ENCODE measurements at regions of chr2 and their contacts with region 1.

Region 1: DNA sequence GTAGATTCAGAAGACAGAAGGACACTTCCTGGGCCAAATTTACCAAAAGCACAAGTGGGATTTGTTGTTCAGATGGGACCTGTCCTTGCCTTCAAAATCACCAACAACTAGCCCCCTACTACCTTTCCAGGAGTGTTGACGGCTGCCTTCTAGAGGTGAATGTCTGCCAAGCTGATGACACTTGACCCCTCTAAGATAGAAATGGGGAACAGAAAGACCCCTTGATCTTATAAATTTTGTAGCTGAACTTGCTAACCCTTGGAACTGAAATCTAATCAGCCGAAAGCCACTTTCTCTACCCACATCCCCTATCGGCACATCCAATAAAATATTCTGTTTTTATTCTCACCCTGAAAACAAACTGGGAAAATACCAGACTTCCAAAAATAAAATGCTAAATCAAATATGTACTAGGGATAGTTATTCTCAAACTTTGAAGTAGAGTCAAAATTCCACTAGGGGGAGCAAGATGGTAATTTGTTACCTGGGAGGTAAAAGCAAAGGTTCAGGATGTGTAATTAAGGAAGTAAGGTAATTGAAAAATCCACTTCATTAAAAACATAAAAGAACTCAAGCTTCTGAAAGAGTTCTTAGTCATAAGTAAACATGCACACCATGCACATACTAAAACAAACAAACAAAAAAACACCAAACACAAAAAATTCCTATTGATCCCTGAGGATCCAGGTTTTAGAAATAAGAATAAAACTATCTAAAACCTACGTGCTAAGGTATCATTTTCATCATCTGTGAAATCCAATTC is 119.2 kb downstream of the ANKRD44 start:
- DNase-seq: no peak
- H3K4me3 Mint-ChIP-seq: no peak overlapping the region
- H3K27ac Mint-ChIP-seq: peak overlapping the region; percentile 62
- H3K4me1 Mint-ChIP-seq: peaks cover 71% of the 10 kb centered on the region
- H3K27me3 Mint-ChIP-seq: no peaks in the 10 kb centered on the region

Region 2: DNA sequence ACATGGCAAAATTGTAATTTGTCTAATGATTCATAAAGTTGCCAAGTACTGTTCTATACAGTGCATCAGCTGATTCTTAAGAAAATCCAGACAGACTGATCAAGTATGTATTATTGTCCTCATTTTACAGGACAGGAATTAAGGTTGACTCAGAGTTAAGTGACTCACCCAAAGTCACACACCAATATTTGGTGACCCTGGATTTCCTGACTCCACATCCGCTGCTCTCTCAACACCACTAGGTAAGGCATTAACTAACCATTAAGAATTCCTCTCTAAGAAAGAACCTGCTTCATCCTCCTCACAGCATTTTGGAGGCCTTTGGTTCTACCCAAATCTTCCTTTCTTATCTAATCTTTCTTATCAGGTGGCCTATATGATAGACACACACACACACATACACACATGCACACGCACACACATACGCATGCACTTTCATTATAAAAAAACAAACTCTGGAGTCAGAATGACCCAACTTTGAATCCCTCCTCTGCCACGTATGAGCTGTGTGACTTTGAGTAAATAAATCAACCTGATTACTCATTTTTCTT is 31.6 kb before region 1 on chr2:
- CTCF ChIA-PET with region 1: interaction called, 3 read pairs
- POLR2A ChIA-PET with region 1: no interaction called
- intact Hi-C with region 1: loop called (anchors 2 kb)
- DNase-seq: peak; percentile 64
- H3K4me3 Mint-ChIP-seq: peak overlapping the region; percentile 0
- H3K27ac Mint-ChIP-seq: peak overlapping the region; percentile 87
- H3K4me1 Mint-ChIP-seq: peaks cover 72% of the 10 kb centered on the region
- H3K27me3 Mint-ChIP-seq: no peaks in the 10 kb centered on the region

Region 3: DNA sequence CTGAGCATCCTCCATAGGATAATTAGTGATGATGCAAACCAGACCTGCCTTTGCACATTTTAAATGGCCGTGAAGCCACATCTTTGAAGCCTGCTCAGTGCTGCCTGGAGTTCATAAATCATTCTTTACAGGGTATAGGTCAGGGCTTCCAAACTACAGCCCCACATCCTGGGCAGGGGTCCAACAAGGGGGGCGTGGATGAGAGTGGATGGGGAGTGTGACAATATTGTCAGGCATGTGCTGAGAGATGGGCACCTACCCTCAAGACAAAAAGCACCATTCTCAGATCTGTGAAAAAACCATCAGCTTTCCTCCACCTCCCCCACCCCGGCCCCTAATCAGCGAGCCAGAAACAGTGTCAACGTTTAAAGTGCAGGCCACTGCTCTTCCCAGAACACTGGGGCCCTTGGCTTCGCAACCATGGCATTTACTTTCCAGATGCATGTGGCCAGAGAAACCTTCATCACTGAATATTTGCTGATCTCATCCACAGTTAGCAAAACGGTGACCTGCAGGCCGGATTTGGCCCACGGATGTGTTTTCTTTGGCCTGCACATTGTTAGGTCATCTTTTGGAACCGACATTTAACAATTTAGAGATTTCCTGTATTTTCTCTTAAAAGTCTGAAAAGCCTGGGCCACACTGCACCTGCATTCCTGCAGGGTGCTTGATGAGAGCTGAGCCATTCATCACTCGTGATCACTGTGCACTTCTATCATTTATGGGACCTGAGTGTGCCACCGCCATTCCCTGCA is 11.4 kb before region 1 on chr2:
- CTCF ChIA-PET with region 1: interaction called, 26 read pairs
- POLR2A ChIA-PET with region 1: no interaction called
- intact Hi-C with region 1: no loop called
- DNase-seq: no peak
- H3K4me3 Mint-ChIP-seq: no peak overlapping the region
- H3K27ac Mint-ChIP-seq: peak overlapping the region; percentile 16
- H3K4me1 Mint-ChIP-seq: peaks cover 66% of the 10 kb centered on the region
- H3K27me3 Mint-ChIP-seq: no peaks in the 10 kb centered on the region

Region 4: DNA sequence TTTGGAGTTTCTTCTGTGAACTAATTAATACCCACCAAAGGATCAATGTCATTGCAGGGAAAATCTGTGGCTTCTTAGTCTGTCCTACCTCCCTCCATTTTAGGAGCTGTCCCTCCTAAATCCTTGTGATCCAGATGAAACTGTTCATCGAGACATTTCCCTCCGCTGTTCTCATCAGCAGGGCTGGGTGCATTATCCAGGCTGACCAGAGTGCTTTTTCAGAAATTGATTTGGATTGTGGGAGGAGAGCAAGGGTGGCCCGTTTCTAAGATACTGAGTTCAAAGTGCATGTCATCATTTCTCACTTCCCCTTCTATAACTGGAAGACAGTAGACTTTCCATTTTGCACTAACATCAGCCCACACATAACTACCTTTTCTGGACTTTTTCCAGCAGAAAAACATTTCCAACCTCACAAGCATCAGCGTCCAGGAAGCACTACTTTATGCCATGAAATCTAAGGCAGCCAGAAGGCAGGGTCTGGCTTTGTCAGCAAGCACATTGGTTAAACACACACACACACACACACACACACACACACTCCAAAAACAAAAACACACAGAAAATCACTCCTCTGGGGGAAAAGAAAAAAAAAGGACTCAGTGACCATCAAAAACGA is 25.1 kb after region 1 on chr2:
- CTCF ChIA-PET with region 1: interaction called, 13 read pairs
- POLR2A ChIA-PET with region 1: interaction called, 3 read pairs
- intact Hi-C with region 1: loop called (anchors 1 kb)
- DNase-seq: no peak
- H3K4me3 Mint-ChIP-seq: peak overlapping the region; percentile 62
- H3K27ac Mint-ChIP-seq: peak overlapping the region; percentile 94
- H3K4me1 Mint-ChIP-seq: peaks cover 86% of the 10 kb centered on the region
- H3K27me3 Mint-ChIP-seq: no peaks in the 10 kb centered on the region

Region 5: DNA sequence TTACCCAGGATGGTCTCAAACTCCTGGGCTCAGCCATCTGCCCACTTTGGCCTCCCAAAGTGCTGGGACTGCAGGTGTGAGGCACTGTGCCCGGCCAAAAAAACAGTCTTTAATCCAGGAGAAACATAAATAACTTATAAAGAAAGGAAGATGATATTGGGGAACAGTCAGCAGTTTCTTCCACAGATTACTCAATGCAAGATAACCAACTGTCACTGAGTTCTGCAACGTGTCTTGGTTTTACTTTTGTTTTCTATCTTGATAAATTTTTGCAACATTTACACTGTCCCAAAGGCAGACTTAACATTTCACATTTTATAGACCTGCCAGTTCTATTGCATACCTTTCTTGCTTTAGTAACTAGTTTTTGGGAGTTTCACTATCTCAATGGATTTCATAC is 48.1 kb after region 1 on chr2:
- CTCF ChIA-PET with region 1: interaction called, 11 read pairs
- POLR2A ChIA-PET with region 1: interaction called, 5 read pairs
- intact Hi-C with region 1: no loop called
- DNase-seq: no peak
- H3K4me3 Mint-ChIP-seq: peak overlapping the region; percentile 78
- H3K27ac Mint-ChIP-seq: peak overlapping the region; percentile 92
- H3K4me1 Mint-ChIP-seq: peaks cover 83% of the 10 kb centered on the region
- H3K27me3 Mint-ChIP-seq: no peaks in the 10 kb centered on the region

Region 6: DNA sequence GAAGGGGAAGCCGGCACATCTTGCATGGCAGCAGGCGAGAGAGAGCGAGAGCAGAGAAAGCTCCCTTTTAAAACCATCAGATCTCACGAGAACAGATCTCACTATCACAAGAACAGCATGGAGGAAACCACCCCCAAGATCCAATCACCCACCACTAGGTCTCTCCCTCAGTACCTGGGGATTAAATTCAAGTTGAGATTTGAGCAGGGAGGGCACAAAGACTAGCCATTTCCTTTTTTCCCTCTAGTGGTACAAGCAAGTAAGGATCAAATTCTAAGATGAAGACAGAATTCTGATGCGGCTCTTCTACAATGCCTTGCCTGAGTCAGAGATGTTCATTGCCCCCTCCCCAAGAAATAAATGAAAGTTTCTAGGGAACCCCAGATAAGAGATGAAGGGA is 164.8 kb after region 1 on chr2:
- CTCF ChIA-PET with region 1: interaction called, 17 read pairs
- POLR2A ChIA-PET with region 1: interaction called, 3 read pairs
- intact Hi-C with region 1: loop called (anchors 5 kb)
- DNase-seq: no peak
- H3K4me3 Mint-ChIP-seq: no peak overlapping the region
- H3K27ac Mint-ChIP-seq: no peak overlapping the region
- H3K4me1 Mint-ChIP-seq: peaks cover 39% of the 10 kb centered on the region
- H3K27me3 Mint-ChIP-seq: no peaks in the 10 kb centered on the region

Region 7: DNA sequence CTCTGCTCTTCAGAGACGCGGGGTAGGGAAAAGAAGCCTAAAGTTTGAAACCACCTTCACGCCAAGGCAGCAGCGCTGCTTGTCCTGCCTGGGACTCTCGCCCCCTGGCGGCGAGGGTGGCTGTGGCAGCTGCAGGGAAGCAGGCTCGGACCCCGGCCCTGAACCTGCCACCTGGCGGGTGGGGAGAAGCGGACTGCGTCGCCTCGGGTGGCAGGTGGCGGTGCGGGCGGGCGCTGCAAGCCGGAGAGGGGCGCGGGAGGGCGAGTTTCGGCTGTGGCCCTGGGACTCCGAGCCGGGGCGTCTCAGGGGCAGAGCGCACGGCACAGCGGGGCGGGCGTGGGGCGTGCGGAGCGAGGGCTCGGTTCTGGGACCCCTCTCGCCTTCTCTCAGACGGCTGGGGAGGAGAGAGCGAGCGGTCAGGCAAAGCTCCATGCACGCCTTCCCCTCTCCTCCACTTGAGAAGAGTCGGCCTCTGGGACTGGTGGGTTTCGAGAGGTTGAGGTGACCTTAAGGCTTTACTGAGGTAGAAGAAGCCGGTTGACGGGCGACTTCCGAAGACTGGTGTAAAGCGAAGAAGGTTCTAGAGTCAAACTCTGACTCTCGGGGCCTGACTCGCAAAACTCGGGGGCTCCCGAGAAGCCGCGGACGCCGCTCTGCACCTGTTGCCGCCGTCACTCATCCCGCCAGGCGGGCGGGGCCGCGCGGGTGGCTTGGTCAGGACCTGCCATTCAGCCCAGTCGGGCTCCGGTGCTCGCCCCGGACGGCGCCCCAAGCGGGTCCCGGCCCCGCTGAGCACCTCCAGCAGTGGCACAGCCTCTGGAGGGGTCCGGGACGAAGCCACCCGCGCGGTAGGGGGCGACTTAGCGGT is 594.9 kb after region 1 on chr2:
- CTCF ChIA-PET with region 1: no interaction called
- POLR2A ChIA-PET with region 1: no interaction called
- intact Hi-C with region 1: no loop called
- DNase-seq: peak; percentile 77
- H3K4me3 Mint-ChIP-seq: peak overlapping the region; percentile 64
- H3K27ac Mint-ChIP-seq: peak overlapping the region; percentile 2
- H3K4me1 Mint-ChIP-seq: peaks cover 2% of the 10 kb centered on the region
- H3K27me3 Mint-ChIP-seq: peaks cover 3% of the 10 kb centered on the region

Measured in activated CD4-positive, alpha-beta memory T cell treated with anti-CD3 and anti-CD28 coated beads for 36 hours (primary cell).